ENCODE measurements at regions of chr3 and their contacts with region 1.

Region 1: DNA sequence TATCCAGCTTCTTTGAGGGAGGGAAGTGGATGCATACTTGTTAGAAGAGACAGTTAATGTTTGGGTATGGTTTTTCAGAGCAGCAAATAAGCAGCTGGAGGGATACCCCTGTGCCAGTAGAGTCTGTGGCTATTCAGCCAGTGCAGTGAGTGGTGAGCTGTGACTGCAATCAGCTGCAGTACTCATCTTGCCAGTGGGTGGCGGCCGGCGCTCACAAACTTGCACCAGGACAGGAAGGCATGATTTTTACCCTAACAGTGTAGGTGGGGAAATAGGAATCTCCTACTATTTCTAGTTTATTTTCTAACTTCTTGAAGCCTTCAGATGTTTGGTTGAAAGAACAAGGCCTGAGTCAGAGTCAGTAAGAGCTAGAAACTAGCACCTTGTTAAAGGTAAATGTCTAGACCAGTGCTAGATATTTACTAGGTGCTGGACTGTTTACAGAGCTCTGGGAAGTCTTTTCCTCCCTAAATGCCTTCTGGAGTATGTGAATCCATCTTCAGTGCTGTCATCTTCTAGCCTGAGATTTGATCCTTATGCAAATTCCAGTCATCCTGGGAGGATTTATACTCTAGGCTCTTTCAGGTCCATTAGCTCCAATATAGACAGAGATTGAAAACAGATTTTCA is 23.6 kb downstream of the TIMP4 start:
- DNase-seq: no peak
- H3K4me3 ChIP-seq: no peak overlapping the region
- H3K27ac ChIP-seq: no peak overlapping the region
- H3K27me3 ChIP-seq: peaks cover 20% of the 10 kb centered on the region
- CTCF ChIP-seq: peak; percentile 98

Region 2: DNA sequence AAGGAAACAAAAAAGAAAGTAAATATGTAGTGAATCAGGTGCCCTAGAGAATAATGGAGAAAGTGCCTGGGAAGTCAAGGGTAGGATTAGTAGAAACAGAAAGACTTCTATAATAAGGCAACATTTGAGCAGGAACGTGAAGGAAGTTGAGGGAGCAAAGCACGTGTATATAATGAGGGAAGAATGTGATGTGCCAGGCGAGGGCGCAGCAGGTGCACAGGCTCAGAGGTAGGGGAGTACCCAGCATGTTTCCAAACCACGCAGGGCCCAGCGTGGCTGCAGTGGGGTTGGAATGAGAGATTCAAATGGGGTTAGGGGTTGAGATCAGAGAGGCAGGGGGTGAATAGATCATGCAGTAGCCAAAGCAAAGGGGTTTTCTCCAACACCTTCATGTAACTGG is 399.5 kb before region 1 on chr3:
- CTCF ChIA-PET with region 1: no interaction called
- POLR2A ChIA-PET with region 1: no interaction called
- DNase-seq: no peak
- H3K4me3 ChIP-seq: no peak overlapping the region
- H3K27ac ChIP-seq: no peak overlapping the region
- H3K27me3 ChIP-seq: peaks cover 38% of the 10 kb centered on the region
- CTCF ChIP-seq: no peak

Region 3: DNA sequence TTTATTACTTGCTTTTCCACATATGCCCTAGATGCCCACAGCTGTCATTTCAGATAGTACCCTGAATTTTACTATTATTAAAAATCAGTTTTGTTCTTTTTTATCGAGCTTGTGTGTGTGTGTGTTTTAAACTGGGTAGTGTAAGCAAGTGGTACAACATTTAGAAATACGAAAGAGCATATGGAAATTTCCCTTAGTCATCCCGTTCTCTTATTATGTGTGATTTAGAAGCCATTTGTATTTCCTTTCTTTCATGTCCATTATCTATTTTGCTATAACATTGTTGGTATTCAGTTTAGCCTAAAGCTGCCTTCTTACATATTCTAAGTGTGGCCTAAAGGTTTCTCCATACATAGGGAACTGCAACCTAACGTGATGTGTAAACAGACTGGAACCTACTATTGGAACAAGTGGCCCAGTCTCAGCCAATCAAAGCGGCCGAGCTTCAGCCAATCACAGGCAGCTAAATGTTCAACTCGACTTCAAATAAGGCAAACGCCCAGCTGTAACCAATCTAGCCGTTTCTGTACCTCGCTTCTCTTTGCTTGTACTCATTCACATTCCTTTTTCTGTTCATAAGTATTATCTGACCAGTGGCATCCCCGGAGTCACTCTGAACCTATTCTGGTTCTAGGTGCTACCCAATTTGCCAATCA is 145.6 kb before region 1 on chr3:
- CTCF ChIA-PET with region 1: no interaction called
- POLR2A ChIA-PET with region 1: no interaction called
- DNase-seq: no peak
- H3K4me3 ChIP-seq: no peak overlapping the region
- H3K27ac ChIP-seq: no peak overlapping the region
- H3K27me3 ChIP-seq: no peaks in the 10 kb centered on the region
- CTCF ChIP-seq: no peak

Region 4: GRCh38 chr3:12175844-12176453 is 40.8 kb after region 1 on chr3:
- CTCF ChIA-PET with region 1: interaction called, 306 read pairs
- POLR2A ChIA-PET with region 1: no interaction called
- DNase-seq: no peak
- H3K4me3 ChIP-seq: no peak overlapping the region
- H3K27ac ChIP-seq: no peak overlapping the region
- H3K27me3 ChIP-seq: no peaks in the 10 kb centered on the region
- CTCF ChIP-seq: peak; percentile 90

Region 5: DNA sequence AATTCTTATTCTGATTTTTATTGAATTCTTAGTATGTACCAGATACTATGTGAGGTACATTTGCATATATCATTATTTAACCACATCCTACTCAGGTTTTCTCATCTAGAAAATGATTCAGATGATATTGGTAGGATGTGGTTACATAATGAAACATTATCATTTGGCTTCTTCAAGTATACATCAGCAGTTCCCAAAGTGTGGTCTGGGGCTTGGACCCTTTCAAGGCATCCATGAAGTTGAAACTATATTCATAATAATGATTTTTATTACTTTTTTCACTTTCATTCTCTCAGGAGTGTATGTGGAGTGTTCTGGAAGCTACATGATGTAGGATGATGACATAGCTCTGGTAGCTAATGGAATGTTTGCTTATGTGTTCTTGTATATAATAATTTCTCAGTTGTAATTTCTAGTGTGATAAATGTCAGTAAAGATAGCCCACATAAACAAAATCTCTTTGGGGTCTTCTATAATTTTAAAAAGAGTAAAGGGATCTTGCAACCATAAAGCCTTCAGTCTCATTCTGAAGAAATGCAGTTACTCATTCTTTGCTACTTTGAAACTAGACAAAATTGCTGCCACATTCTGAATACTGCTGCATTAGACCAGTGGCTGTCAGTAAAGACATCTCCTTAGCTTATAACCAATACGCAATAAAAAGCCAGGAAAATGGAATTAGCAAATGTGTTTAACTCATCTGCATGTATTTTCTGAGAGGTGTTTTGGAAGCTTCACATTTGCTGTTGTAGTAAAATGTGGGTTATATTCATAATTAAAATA is 249.5 kb after region 1 on chr3:
- CTCF ChIA-PET with region 1: no interaction called
- POLR2A ChIA-PET with region 1: no interaction called
- DNase-seq: no peak
- H3K4me3 ChIP-seq: no peak overlapping the region
- H3K27ac ChIP-seq: no peak overlapping the region
- H3K27me3 ChIP-seq: no peaks in the 10 kb centered on the region
- CTCF ChIP-seq: no peak

Region 6: DNA sequence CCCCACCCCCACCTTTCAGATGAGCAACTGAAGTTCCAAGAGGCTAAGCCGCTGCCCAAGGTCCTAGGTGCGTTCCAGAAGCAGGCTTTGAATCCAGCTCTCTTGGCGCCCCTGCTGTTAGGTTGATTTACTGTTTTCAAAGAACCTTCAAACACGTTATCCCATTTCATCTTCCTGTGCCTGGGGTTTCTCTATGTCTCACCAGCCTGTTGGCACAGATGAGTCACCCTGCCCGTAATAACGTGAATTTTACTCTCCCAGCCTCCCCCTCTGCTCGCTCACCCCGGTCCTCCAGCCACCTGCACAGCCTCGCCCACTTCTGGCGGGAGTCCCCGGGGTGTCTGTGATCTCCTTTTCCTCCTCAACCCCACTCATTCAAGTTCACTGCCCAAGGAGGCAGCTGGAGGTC is 336.1 kb after region 1 on chr3:
- CTCF ChIA-PET with region 1: interaction called, 353 read pairs
- POLR2A ChIA-PET with region 1: no interaction called
- DNase-seq: no peak
- H3K4me3 ChIP-seq: no peak overlapping the region
- H3K27ac ChIP-seq: no peak overlapping the region
- H3K27me3 ChIP-seq: peaks cover 3% of the 10 kb centered on the region
- CTCF ChIP-seq: no peak

Region 7: DNA sequence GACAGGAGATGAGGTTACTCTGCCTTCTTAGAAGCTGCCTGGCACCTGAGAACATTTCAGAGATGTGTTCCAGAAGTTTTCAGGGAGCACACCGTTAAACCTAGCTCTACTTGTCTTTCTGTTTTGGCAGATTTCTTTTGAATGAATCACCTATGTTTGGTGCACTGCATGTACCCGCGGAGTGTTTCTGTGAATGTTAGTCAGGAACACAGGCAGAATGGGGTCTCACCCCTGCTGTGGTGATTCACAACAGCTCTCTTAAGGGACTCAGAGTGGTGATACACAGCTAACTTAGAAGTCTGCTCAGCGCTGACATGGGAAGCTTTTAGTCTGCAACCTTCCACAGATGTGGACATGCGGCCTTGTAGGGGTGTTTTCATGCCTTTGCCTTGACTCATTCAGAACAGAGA is 373.2 kb after region 1 on chr3:
- CTCF ChIA-PET with region 1: interaction called, 10 read pairs
- POLR2A ChIA-PET with region 1: interaction called, 3 read pairs
- DNase-seq: peak; percentile 98
- H3K4me3 ChIP-seq: peak overlapping the region; percentile 45
- H3K27ac ChIP-seq: peak overlapping the region; percentile 94
- H3K27me3 ChIP-seq: no peaks in the 10 kb centered on the region
- CTCF ChIP-seq: no peak

Region 8: GRCh38 chr3:12536423-12536822 is 401.3 kb after region 1 on chr3:
- CTCF ChIA-PET with region 1: interaction called, 25 read pairs
- POLR2A ChIA-PET with region 1: no interaction called
- DNase-seq: no peak
- H3K4me3 ChIP-seq: no peak overlapping the region
- H3K27ac ChIP-seq: no peak overlapping the region
- H3K27me3 ChIP-seq: no peaks in the 10 kb centered on the region
- CTCF ChIP-seq: peak; percentile 56

Measured in AG04450 (cell line).